MCF 10A (cell line): ENCODE measurements at regions of chr5 and their contacts with region 1.

Region 1: DNA sequence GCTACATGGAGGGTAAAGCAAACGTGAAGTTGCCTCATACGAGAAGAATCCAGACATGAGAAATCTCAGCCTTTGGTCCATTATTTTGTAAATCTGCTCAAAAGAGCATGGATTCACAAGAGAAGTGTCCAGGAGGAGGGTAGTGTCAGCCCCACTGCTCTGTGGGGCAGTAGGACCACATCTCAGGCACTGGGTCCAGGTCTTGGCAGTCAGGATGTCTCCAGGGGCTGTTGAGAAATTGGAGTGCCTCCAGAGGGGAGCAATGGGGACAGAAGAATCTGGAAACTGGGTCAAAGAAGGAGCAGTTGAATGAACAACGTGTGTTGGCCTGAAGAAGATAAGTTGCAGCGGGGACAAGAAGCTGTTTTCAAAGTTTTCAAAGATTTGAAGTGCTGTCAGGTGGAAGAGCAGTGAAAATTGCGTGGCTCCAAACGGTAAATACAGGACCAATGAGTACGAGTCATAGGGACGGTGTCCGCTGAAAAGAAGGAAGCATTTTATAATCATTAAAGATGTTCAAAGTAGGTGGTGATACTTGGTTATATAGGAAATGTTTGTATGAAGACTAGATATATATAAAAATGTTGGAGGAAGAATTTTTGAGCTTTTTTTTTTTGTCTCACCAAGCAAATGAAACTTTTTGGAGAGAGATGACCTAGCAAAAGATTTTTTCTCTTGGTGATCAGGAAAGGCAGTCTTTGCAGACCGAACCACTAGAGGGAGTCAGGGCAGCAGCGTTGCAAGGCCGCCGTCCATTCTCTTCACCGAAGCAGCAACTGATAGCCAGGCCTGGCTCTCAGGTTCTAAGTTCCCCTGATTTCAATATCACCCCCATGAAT is 57.1 kb upstream of the ZBED3 start:
- DNase-seq: peak; percentile 76
- H3K4me3 Mint-ChIP-seq: no peak overlapping the region
- H3K27ac Mint-ChIP-seq: no peak overlapping the region
- H3K4me1 Mint-ChIP-seq: peaks cover 22% of the 10 kb centered on the region
- H3K27me3 Mint-ChIP-seq: no peaks in the 10 kb centered on the region
- CTCF ChIP-seq: peak; percentile 74

Region 2: DNA sequence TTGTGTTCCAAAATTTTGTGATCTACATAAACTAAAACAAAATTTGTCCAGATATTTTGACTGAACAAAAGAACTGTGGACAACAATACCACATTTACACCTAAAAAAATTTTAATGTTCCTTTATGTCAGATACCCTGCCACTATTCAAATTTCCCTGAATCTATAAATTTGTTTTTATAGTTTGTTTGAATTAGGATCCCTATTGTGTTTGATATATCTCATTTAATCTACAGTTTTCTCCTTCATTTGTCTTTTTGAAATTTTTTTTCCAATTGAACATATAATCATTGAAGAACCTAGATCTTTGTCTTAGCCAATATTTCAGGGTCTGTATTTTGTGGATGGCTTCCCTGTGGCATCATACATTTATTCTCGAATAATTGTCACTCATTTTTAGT is 108.3 kb before region 1 on chr5:
- CTCF ChIA-PET with region 1: no interaction called
- POLR2A ChIA-PET with region 1: no interaction called
- intact Hi-C with region 1: no loop called
- DNase-seq: no peak
- H3K4me3 Mint-ChIP-seq: no peak overlapping the region
- H3K27ac Mint-ChIP-seq: no peak overlapping the region
- H3K4me1 Mint-ChIP-seq: no peaks in the 10 kb centered on the region
- H3K27me3 Mint-ChIP-seq: no peaks in the 10 kb centered on the region
- CTCF ChIP-seq: no peak

Region 3: GRCh38 chr5:77086689-77087483 is 57.3 kb before region 1 on chr5 and contains the start of gene ZBED3:
- CTCF ChIA-PET with region 1: interaction called, 10 read pairs
- POLR2A ChIA-PET with region 1: no interaction called
- intact Hi-C with region 1: no loop called
- DNase-seq: peak; percentile 86
- H3K4me3 Mint-ChIP-seq: peak within 1 kb of the TSS; percentile 86
- H3K27ac Mint-ChIP-seq: peak within 1 kb of the TSS; percentile 83
- H3K4me1 Mint-ChIP-seq: peaks cover 11% of the 10 kb centered on the region
- H3K27me3 Mint-ChIP-seq: no peaks in the 10 kb centered on the region
- CTCF ChIP-seq: no peak
- total RNA-seq, gene ZBED3: 9.8 and 14.8 TPM in 2 replicates

Region 4: DNA sequence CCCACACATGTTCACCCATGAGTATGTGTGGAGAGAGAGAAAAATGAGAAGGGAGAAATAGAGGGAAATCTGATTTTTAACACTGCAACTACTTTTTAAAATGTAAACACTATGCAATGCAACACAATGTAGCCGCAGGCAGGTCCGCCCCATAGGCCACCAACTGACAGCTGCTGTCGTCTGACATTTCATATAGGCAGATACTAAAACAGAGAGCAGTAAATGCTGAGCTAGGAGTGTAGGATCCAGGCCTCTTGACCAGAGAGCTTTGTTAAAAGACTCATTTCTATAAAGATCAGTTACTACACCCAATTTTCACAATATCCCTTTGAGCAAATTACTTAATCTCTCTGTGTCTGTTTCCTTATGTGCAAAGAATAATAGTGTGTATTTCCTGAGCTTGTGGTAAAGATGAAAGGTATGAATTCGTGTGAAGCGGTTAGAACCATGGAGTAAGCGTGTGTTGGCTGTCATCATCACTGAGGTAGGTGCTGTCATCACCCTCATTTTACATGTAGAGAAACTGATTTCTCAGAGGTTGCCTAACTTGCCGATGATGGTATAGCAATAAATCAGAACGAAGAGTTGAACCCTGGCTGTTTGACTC is 11.1 kb after region 1 on chr5:
- CTCF ChIA-PET with region 1: interaction called, 31 read pairs
- POLR2A ChIA-PET with region 1: interaction called, 4 read pairs
- intact Hi-C with region 1: no loop called
- DNase-seq: no peak
- H3K4me3 Mint-ChIP-seq: no peak overlapping the region
- H3K27ac Mint-ChIP-seq: no peak overlapping the region
- H3K4me1 Mint-ChIP-seq: no peaks in the 10 kb centered on the region
- H3K27me3 Mint-ChIP-seq: no peaks in the 10 kb centered on the region
- CTCF ChIP-seq: no peak

Region 5: GRCh38 chr5:77239126-77239741 is 95.0 kb after region 1 on chr5:
- CTCF ChIA-PET with region 1: interaction called, 27 read pairs
- POLR2A ChIA-PET with region 1: no interaction called
- intact Hi-C with region 1: loop called (anchors 1 kb)
- DNase-seq: peak; percentile 31
- H3K4me3 Mint-ChIP-seq: no peak overlapping the region
- H3K27ac Mint-ChIP-seq: no peak overlapping the region
- H3K4me1 Mint-ChIP-seq: no peaks in the 10 kb centered on the region
- H3K27me3 Mint-ChIP-seq: peaks cover 9% of the 10 kb centered on the region
- CTCF ChIP-seq: no peak

Region 6: GRCh38 chr5:77491783-77492652 is 347.8 kb after region 1 on chr5 and contains the start of gene WDR41:
- CTCF ChIA-PET with region 1: interaction called, 58 read pairs
- POLR2A ChIA-PET with region 1: interaction called, 29 read pairs
- intact Hi-C with region 1: no loop called
- DNase-seq: peak; percentile 95
- H3K4me3 Mint-ChIP-seq: peak within 1 kb of the TSS; percentile 93
- H3K27ac Mint-ChIP-seq: peak within 1 kb of the TSS; percentile 97
- H3K4me1 Mint-ChIP-seq: peaks cover 23% of the 10 kb centered on the region
- H3K27me3 Mint-ChIP-seq: peaks cover 11% of the 10 kb centered on the region
- CTCF ChIP-seq: peak; percentile 87
- total RNA-seq, gene WDR41: 106 and 107 TPM in 2 replicates